ENCODE measurements at regions of chr2 and their contacts with region 1.

Region 1: GRCh38 chr2:219177552-219178376 is at the start of gene RETREG2:
- DNase-seq: peak; percentile 79
- H3K4me3 Mint-ChIP-seq: peak within 1 kb of the TSS; percentile 94
- H3K27ac Mint-ChIP-seq: peak within 1 kb of the TSS; percentile 98
- H3K4me1 Mint-ChIP-seq: peaks cover 38% of the 10 kb centered on the region
- H3K27me3 Mint-ChIP-seq: no peaks in the 10 kb centered on the region
- total RNA-seq, gene RETREG2: 52.5 and 57.4 TPM in 2 replicates

Region 2: DNA sequence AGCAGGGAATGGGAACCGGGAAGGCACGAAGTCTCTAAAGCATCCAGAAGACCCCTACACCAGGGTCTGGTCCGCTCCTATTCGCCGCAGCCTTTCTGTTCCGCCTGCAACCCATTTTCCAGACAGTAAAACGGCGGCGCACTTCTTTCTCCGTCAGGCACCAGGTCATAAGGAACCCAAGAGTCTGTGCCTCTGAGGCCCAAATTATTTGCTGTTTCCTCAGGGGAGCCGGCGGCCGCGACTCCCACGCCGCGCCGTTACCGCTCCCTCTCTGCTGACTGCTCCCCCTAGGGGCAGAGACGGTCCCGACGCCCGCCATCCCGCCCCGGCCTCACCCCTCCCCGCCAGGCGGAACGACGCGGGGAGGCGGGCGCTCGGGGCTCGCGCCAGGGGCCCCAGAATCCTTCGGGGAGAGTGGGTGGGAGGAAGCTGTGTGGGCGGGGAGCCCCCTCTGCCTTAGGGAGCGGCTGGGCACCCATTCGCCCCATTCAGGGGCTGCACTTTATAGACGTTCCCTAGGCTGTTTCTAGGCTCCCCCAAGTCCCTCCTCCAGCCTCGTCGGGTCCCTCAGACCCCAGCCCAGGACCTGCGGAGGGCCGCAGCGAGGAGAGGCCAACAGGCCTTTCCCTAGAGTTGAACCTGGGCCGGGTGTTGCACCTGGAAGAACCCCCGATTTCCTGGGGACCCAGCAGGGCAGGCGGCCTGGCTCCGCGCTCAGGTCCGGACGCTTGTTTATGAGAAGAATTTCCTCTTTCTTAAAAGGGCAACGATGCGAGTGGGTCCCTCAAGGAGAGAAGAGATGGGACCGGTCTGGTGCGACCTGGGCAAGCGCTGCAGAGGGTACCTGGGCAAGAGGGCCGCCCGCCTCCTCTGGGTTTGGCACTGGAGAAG is 781.7 kb before region 1 on chr2:
- intact Hi-C with region 1: loop called (anchors 5 kb)
- DNase-seq: peak; percentile 93
- H3K4me3 Mint-ChIP-seq: peak overlapping the region; percentile 86
- H3K27ac Mint-ChIP-seq: peak overlapping the region; percentile 93
- H3K4me1 Mint-ChIP-seq: peaks cover 30% of the 10 kb centered on the region
- H3K27me3 Mint-ChIP-seq: no peaks in the 10 kb centered on the region

Region 3: GRCh38 chr2:219206442-219207253 is 28.9 kb after region 1 on chr2 and contains the start of gene ZFAND2B:
- intact Hi-C with region 1: loop called (anchors 1 kb)
- DNase-seq: peak; percentile 94
- H3K4me3 Mint-ChIP-seq: peak within 1 kb of the TSS; percentile 84
- H3K27ac Mint-ChIP-seq: peak within 1 kb of the TSS; percentile 90
- H3K4me1 Mint-ChIP-seq: peaks cover 38% of the 10 kb centered on the region
- H3K27me3 Mint-ChIP-seq: no peaks in the 10 kb centered on the region
- total RNA-seq, gene ZFAND2B: 27.3 and 33.5 TPM in 2 replicates

Region 4: DNA sequence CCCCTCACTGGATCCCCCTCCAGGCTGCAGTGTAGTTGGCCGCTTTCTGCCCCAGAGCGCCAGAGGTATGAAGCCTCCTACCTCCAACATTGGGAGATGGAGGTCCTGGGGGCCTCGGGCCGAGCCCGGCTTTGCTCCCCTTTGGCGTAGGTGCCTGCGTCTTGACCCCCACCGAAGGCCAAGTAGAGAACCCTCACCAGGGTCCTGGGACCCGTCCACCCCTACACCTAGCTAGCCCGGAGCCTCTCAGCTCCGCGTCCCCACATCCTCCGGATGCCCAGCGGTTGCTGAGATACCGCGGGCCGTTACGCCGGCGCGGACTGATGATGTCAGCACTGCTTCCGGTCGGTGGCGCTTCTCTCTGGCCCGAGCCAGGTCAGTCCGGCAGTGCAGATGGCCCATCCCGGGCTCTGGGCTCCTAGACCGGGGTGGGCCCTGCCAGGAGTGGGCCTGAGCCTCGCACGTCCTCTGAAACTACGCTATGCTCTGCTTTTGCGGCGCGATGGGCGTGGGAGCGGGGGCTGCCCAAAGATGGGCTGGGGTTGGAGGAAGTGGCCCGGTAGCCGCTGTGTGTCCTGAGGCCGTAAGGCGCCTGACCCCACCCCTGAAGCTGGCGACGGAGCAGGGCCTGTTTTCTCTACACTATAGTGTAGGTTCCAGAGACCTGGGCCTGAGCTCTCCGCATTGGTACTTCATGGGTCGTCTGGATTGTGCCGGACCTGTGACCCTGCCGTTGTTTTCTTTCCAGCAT is 67.6 kb after region 1 on chr2 and contains the starts of genes GLB1L and STK16:
- intact Hi-C with region 1: loop called (anchors 1 kb)
- DNase-seq: peak; percentile 88
- H3K4me3 Mint-ChIP-seq: peak within 1 kb of the TSS; percentile 96
- H3K27ac Mint-ChIP-seq: peak within 1 kb of the TSS; percentile 97
- H3K4me1 Mint-ChIP-seq: peaks cover 50% of the 10 kb centered on the region
- H3K27me3 Mint-ChIP-seq: no peaks in the 10 kb centered on the region
- total RNA-seq, gene GLB1L: 4.2 and 4.4 TPM in 2 replicates
- total RNA-seq, gene STK16: 32.0 and 33.3 TPM in 2 replicates

Region 5: DNA sequence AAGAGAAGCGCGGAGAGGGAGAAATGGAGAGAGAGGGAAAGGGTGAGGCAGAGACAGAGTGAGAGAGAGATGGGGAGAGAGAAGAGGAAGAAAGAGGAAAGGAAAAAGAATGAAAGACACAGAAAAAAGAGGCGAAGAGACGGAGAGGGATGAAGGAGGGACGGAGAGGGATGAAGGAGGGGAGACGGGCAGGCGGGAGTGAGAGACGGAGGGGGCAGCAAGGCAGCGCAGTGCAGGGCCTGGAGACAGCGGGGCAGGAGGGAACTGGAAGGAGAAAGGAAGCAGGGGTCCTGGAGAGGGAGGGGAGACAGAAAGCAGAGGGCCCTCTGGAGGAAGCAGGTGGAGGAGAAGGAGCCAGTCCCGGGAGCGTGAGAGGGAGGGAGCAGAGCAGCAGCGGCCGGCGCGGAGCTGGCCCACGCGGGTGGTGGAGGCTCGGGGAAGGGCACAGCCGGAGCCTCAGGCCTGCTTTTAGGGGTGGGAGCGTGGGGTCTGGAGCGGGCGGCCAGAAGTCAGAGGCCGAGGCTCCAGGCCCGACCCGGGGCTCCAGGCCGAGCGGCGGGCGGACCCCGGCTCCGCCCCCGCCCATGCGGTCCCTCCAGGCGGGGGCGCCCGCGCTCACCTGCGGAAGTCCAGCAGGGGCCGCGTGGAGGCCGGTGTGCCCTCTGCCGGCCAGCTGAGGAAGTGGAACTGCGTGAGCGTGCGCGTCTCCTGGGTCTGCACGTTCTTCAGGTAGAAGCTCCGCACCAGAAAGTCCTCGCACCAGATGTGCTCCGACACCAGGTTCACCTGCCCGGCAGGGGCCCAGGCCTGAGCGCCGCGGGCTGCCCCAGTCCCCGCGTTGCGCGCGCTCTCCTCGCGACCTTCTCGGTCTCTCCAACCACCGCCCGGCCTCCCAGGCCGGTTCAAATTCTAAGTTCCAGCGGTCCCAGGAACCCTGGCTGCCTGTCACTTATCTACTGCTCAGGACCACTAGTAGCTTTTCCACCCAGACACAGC is 116.9 kb after region 1 on chr2:
- intact Hi-C with region 1: loop called (anchors 1 kb)
- DNase-seq: peak; percentile 85
- H3K4me3 Mint-ChIP-seq: peak overlapping the region; percentile 79
- H3K27ac Mint-ChIP-seq: peak overlapping the region; percentile 87
- H3K4me1 Mint-ChIP-seq: peaks cover 11% of the 10 kb centered on the region
- H3K27me3 Mint-ChIP-seq: peaks cover 1% of the 10 kb centered on the region

Region 6: GRCh38 chr2:219597552-219598307 is 420.0 kb after region 1 on chr2 and contains the start of gene STK11IP:
- intact Hi-C with region 1: loop called (anchors 5 kb)
- DNase-seq: peak; percentile 89
- H3K4me3 Mint-ChIP-seq: peak within 1 kb of the TSS; percentile 93
- H3K27ac Mint-ChIP-seq: peak within 1 kb of the TSS; percentile 90
- H3K4me1 Mint-ChIP-seq: peaks cover 18% of the 10 kb centered on the region
- H3K27me3 Mint-ChIP-seq: no peaks in the 10 kb centered on the region
- total RNA-seq, gene STK11IP: 32.5 and 38.1 TPM in 2 replicates